ENCODE measurements at regions of chr14 and their contacts with region 1.

Region 1: GRCh38 chr14:51357250-51357649 is 117.2 kb downstream of the TMX1 start:
- DNase-seq: no peak
- H3K4me3 Mint-ChIP-seq: peak overlapping the region; percentile 24
- H3K27ac Mint-ChIP-seq: peak overlapping the region; percentile 87
- H3K4me1 Mint-ChIP-seq: peaks cover 24% of the 10 kb centered on the region
- H3K27me3 Mint-ChIP-seq: no peaks in the 10 kb centered on the region
- CTCF ChIP-seq: no peak

Region 2: DNA sequence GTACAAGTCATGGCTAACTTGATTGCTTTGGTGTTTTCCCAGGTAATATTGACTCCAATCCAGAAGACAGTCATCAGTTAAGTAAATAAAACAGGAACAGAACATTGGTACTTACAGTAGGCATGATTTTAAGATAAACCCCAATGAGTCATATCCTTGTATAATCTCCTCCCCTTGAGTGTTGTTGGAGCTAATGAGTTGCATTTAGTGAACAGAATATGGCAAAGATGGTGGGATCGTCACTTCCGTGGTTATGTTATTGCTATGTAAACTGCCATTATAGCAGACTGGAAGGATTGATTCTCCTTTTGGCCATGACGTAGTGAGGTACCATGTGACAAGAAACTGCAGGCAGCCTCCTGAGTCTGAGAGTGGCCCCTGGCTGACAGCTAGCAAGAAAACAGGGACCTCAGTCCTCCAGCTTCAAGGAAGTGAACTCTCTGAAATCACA is 15.0 kb before region 1 on chr14:
- CTCF ChIA-PET with region 1: no interaction called
- POLR2A ChIA-PET with region 1: interaction called, 11 read pairs
- intact Hi-C with region 1: no loop called
- DNase-seq: peak; percentile 76
- H3K4me3 Mint-ChIP-seq: no peak overlapping the region
- H3K27ac Mint-ChIP-seq: peak overlapping the region; percentile 74
- H3K4me1 Mint-ChIP-seq: peaks cover 12% of the 10 kb centered on the region
- H3K27me3 Mint-ChIP-seq: no peaks in the 10 kb centered on the region
- CTCF ChIP-seq: no peak

Region 3: DNA sequence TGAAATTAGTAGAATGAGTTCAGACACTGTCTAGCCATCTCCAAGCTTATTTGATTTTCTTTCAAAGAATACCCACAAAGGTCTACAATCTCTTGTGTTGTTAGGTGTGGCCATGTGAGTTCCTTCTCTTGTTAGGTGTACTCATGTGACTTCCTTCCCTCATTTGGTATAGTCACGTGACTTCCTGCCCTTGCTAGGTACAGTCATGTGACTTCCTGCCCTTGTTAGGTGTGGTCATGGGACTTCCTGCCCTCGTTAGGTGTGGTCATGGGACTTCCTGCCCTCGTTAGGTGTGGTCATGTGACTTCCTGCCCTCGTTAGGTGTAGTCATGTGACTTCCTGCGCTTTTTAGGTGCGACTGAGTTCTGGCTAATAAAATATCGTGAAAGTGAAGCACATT is 62.4 kb after region 1 on chr14:
- CTCF ChIA-PET with region 1: no interaction called
- POLR2A ChIA-PET with region 1: no interaction called
- intact Hi-C with region 1: no loop called
- DNase-seq: no peak
- H3K4me3 Mint-ChIP-seq: no peak overlapping the region
- H3K27ac Mint-ChIP-seq: no peak overlapping the region
- H3K4me1 Mint-ChIP-seq: no peaks in the 10 kb centered on the region
- H3K27me3 Mint-ChIP-seq: no peaks in the 10 kb centered on the region
- CTCF ChIP-seq: no peak